Ovary (tissue), 10 donors: ENCODE measurements at regions of chr19 and their contacts with region 1.

Region 1: GRCh38 chr19:35693830-35694599 is 10.3 kb upstream of the ZBTB32 start:
- DNase-seq: peak; percentile 77 to 88 (median 86)
- H3K4me3 ChIP-seq: no peak overlapping the region
- H3K27ac ChIP-seq: no peak overlapping the region
- H3K4me1 ChIP-seq: no peaks in the 10 kb centered on the region
- H3K27me3 ChIP-seq: no peaks in the 10 kb centered on the region
- CTCF ChIP-seq: peak; percentile 88 to 97 (median 96)
- EP300 ChIP-seq: no peak
- POLR2A ChIP-seq: no peak

Region 2: DNA sequence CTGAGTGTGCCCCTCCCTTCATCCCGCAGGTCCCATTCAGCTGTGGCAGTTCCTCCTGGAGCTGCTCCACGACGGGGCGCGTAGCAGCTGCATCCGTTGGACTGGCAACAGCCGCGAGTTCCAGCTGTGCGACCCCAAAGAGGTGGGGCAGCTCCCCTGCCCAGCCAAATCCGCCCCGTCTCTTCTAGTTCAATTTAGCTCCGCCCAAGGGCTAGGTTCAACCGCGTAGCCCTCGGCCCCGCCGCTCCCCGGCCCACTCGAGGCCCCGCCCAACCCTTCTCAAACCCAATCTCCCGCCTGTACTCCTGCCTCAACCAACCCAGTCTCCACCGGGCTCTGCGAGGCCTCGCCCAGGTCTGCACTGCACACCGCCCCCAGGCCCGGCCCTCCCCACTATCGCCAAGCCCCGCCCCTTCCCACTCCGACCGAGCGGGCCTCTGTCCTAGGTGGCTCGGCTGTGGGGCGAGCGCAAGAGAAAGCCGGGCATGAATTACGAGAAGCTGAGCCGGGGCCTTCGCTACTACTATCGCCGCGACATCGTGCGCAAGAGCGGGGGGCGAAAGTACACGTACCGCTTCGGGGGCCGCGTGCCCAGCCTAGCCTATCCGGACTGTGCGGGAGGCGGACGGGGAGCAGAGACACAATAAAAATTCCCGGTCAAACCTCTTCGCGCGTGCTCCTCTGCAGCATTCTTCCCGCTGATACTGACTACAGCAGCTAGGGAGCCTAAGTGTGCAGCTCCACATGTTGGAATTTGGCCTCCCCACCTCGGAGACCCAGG is 49.6 kb before region 1 on chr19:
- intact Hi-C with region 1: no loop called
- DNase-seq: peak; percentile 92 to 95 (median 95)
- H3K4me3 ChIP-seq: peak overlapping the region; percentile 61
- H3K27ac ChIP-seq: peak overlapping the region; percentile 68 to 81
- H3K4me1 ChIP-seq: peaks cover 10% of the 10 kb centered on the region
- H3K27me3 ChIP-seq: no peaks in the 10 kb centered on the region
- CTCF ChIP-seq: no peak
- EP300 ChIP-seq: no peak
- POLR2A ChIP-seq: peak; percentile 25

Region 3: DNA sequence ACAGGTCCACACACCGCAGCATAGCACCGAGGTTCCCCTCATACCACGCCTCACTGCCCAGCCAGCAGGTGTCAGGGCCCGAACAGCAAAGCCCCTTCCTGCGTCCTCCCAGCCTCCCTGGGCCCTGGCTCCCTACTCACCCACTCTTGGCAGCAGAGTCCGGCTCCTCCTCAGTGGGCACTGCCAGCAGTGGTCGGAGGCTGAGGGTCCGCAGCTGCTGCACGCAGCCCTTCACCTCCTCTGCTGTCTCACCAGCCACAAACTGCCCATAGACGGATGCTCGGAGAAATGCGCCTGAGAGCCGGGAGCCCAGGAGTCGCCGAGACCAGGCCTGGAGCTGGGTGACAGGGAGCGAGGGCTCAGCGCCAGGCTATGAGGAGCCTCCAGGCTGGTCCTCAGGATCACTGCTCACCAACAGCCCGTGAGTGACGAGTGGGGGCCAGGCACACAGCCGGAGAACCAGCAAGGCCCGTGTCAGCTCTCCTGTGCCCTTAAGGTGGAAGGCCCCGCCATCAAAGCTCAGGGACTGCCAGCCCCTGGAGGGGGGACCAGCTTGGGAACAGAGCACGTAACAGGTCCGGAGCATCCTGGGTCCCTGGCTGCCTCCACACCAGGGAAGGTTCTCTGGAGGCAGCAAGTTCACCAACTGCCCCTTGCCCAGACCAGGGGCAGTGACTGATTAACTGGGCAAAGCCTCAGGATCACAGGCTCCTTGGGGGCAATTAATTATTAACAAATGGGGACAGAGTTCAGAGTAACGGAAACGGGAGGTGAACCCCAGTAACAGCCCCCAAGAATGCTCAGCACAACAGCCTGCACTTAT is 118.4 kb after region 1 on chr19 and contains the start of gene PRODH2:
- intact Hi-C with region 1: loop called in 1 of 4 experiments (anchors 5 kb)
- DNase-seq: no peak
- H3K4me3 ChIP-seq: no peak within 1 kb of the TSS
- H3K27ac ChIP-seq: no peak within 1 kb of the TSS
- H3K4me1 ChIP-seq: no peaks in the 10 kb centered on the region
- H3K27me3 ChIP-seq: no peaks in the 10 kb centered on the region
- CTCF ChIP-seq: no peak
- EP300 ChIP-seq: no peak
- POLR2A ChIP-seq: no peak
- total RNA-seq, gene PRODH2: 0.41 TPM in 1 of 7 donors, not detected in the others

Region 4: GRCh38 chr19:35818445-35818844 is 124.4 kb after region 1 on chr19:
- intact Hi-C with region 1: loop called in 3 of 4 experiments (anchors 2 to 10 kb)
- DNase-seq: no peak
- H3K4me3 ChIP-seq: no peak overlapping the region
- H3K27ac ChIP-seq: no peak overlapping the region
- H3K4me1 ChIP-seq: no peaks in the 10 kb centered on the region
- H3K27me3 ChIP-seq: no peaks in the 10 kb centered on the region
- CTCF ChIP-seq: no peak
- EP300 ChIP-seq: no peak
- POLR2A ChIP-seq: no peak

Region 5: DNA sequence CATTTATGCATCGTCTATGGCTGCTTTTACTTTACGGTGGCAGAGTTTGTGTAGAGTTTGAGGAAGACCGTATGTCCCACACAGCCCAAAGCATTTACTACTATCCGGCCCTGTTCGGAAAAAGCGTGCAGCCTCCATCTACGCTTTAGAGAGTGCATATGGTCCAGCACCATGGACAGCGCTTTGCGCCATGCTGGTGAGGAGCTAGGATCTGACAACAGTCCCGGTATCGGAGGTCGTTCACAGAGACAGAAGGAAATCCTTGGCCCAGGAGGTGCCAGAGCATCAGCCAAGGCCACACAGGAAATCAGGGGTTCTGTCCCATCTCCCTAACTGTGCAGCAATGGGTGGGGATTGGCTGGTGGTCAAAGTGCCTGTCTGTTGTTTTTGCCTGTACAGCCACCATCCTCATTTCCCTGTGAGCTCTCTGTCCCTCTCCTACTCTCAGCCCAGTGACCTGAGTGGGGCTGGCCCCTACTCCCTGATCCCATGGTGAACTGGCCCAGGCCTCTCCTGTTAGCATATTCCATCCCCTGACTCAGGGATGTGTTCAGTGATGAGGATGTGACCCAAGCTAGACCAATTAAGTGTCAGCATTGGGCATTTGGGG is 134.8 kb after region 1 on chr19:
- intact Hi-C with region 1: loop called in 1 of 4 experiments (anchors 10 kb)
- DNase-seq: peak; percentile 43 to 83 (median 70)
- H3K4me3 ChIP-seq: no peak overlapping the region
- H3K27ac ChIP-seq: no peak overlapping the region
- H3K4me1 ChIP-seq: no peaks in the 10 kb centered on the region
- H3K27me3 ChIP-seq: no peaks in the 10 kb centered on the region
- CTCF ChIP-seq: no peak
- EP300 ChIP-seq: no peak
- POLR2A ChIP-seq: no peak

Region 6: GRCh38 chr19:35921012-35921411 is 227.0 kb after region 1 on chr19:
- intact Hi-C with region 1: no loop called
- DNase-seq: no peak
- H3K4me3 ChIP-seq: no peak overlapping the region
- H3K27ac ChIP-seq: no peak overlapping the region
- H3K4me1 ChIP-seq: no peaks in the 10 kb centered on the region
- H3K27me3 ChIP-seq: no peaks in the 10 kb centered on the region
- CTCF ChIP-seq: no peak
- EP300 ChIP-seq: no peak
- POLR2A ChIP-seq: no peak